Activated CD4-positive, alpha-beta T cell treated with anti-CD3 and anti-CD28 coated beads for 36 hours (primary cell): ENCODE measurements at regions of chr3 and their contacts with region 1.

Region 1: GRCh38 chr3:58640700-58641372 is 25.7 kb downstream of the FAM3D start:
- DNase-seq: peak; percentile 81
- ATAC-seq: peak; percentile 96
- H3K4me3 Mint-ChIP-seq: no peak overlapping the region
- H3K27ac Mint-ChIP-seq: no peak overlapping the region
- H3K4me1 Mint-ChIP-seq: no peaks in the 10 kb centered on the region
- H3K27me3 Mint-ChIP-seq: peaks cover 1% of the 10 kb centered on the region

Region 2: DNA sequence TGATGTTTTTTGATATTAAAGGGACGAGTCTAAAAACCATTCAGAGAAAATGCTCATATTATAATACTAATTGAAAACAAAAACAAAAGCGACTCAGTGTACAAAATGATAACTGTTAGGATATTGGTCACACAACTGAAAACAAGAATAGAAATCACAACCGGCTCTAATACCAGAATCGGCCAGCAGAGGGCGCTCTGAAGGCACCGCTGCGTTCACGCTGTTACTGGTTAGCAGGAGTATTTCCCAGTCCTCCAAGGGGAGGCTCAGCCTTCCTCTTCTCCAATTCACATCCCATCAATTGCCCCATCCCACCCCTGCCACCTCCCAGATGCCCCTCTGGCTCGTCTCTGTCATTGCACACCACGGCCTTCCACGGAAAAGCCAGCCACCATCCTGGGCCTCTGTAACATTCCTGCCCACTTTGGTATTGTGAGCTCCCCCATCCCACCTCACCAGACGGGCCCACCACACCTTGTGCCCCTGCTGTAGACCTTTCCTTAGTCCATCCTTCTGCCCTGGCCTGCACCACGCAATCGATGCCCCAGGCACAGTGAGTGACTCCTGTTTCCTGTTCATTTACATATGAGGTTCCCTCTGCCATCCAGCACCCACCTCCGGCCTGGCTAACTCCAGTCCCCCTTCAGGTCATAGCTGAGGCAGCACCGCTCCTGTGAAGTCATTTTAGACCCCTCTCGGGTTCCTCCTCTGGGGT is 72.1 kb before region 1 on chr3:
- CTCF ChIA-PET with region 1: interaction called, 10 read pairs
- POLR2A ChIA-PET with region 1: no interaction called
- intact Hi-C with region 1: no loop called
- DNase-seq: peak; percentile 87
- ATAC-seq: peak; percentile 70
- H3K4me3 Mint-ChIP-seq: no peak overlapping the region
- H3K27ac Mint-ChIP-seq: no peak overlapping the region
- H3K4me1 Mint-ChIP-seq: peaks cover 4% of the 10 kb centered on the region
- H3K27me3 Mint-ChIP-seq: no peaks in the 10 kb centered on the region

Region 3: GRCh38 chr3:58994746-58995330 is 354.0 kb after region 1 on chr3:
- CTCF ChIA-PET with region 1: no interaction called
- POLR2A ChIA-PET with region 1: no interaction called
- intact Hi-C with region 1: loop called in 1 of 2 experiments (anchors 2 kb)
- DNase-seq: peak; percentile 47
- ATAC-seq: no peak
- H3K4me3 Mint-ChIP-seq: no peak overlapping the region
- H3K27ac Mint-ChIP-seq: no peak overlapping the region
- H3K4me1 Mint-ChIP-seq: peaks cover 7% of the 10 kb centered on the region
- H3K27me3 Mint-ChIP-seq: peaks cover 5% of the 10 kb centered on the region

Region 4: DNA sequence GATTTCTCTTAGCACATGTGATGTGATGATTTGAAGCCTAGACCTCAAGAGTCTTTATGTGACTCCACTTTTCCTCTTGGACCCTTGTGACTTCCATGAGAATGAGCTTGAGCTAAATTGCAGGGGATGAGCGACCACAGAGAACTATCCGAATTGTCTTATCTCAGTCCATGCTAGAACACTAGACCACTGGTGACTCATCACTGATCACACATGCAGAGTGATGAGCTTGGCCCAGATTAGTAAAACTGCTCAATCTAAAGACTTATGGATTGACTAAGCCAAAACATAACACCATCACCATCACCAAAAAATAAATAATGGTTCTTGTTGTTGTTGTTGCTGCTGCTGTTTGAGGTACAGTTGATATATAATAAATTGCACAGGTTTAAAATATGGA is 523.1 kb after region 1 on chr3:
- CTCF ChIA-PET with region 1: no interaction called
- POLR2A ChIA-PET with region 1: no interaction called
- intact Hi-C with region 1: loop called in 1 of 2 experiments (anchors 10 kb)
- DNase-seq: no peak
- ATAC-seq: peak; percentile 51
- H3K4me3 Mint-ChIP-seq: no peak overlapping the region
- H3K27ac Mint-ChIP-seq: no peak overlapping the region
- H3K4me1 Mint-ChIP-seq: no peaks in the 10 kb centered on the region
- H3K27me3 Mint-ChIP-seq: peaks cover 6% of the 10 kb centered on the region